Ovary (tissue), 10 donors: ENCODE measurements at regions of chr2 and their contacts with region 1.

Region 1: DNA sequence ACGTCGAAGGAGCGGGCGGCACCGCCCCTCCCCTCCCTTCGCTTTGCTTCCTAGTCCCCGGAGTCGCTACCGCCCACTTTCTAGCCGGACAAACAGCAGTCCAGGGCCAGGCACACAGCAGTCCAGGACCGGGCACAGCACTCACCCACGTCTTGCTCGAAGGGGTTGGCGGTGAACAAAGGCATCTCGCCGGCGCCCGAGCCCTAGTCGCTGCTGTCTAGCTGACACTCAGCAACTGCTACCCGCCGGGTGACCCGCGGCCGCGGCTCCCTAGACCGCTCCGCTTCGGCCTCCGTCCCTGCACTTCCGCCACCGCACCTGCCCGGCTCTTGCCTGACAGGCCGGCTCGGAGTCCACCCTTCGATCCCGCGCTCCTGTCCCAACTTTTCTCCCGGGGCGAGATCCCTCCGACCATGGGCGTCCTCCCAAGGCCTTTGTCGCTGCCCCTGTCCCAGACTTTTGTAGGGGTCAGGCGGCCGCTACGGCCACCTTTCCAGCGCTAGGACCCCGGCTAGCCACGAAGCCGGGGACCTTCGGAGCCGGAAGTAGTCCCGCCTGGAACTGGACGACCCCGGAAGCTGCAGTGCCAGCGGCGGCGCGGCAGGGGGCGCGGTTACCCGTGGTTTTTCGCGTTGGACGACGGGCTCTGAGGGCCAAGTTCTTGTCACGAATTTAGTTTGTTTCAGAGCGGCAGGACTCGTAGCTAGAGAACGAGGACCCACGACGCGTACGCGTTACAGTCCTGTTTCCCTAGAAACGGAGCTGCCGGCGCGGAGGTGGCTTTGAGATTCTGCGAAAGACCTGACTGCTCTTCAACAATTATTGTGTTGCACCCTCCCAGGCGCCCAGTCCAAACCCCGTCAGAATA is at the start of gene STAM2:
- DNase-seq: peak; percentile 90 to 97 (median 92)
- H3K4me3 ChIP-seq: peak within 1 kb of the TSS; percentile 93
- H3K27ac ChIP-seq: peak within 1 kb of the TSS; percentile 60 to 92
- H3K4me1 ChIP-seq: peaks cover 4% of the 10 kb centered on the region
- H3K27me3 ChIP-seq: no peaks in the 10 kb centered on the region
- CTCF ChIP-seq: peak; percentile 94 to 95 (median 94)
- EP300 ChIP-seq: no peak
- POLR2A ChIP-seq: peak; percentile 61
- total RNA-seq, gene STAM2: 29.6 to 40.0 (median 33.9) TPM

Region 2: GRCh38 chr2:152036611-152037469 is 138.9 kb before region 1 on chr2:
- intact Hi-C with region 1: loop called in 2 of 4 experiments (anchors 5 to 10 kb)
- DNase-seq: peak; percentile 50 to 74 (median 64)
- H3K4me3 ChIP-seq: no peak overlapping the region
- H3K27ac ChIP-seq: no peak overlapping the region
- H3K4me1 ChIP-seq: no peaks in the 10 kb centered on the region
- H3K27me3 ChIP-seq: no peaks in the 10 kb centered on the region
- CTCF ChIP-seq: peak; percentile 33 to 60 (median 57)
- EP300 ChIP-seq: no peak
- POLR2A ChIP-seq: no peak

Region 3: GRCh38 chr2:152717228-152718075 is 541.8 kb after region 1 on chr2 and contains the start of gene PRPF40A:
- intact Hi-C with region 1: loop called in 1 of 4 experiments (anchors 5 kb)
- DNase-seq: peak; percentile 98 to 99 (median 99)
- H3K4me3 ChIP-seq: peak within 1 kb of the TSS; percentile 96
- H3K27ac ChIP-seq: peak within 1 kb of the TSS; percentile 92 to 94
- H3K4me1 ChIP-seq: peaks cover 5% of the 10 kb centered on the region
- H3K27me3 ChIP-seq: no peaks in the 10 kb centered on the region
- CTCF ChIP-seq: peak in 1 of 3 donors; percentile 16
- EP300 ChIP-seq: no peak
- POLR2A ChIP-seq: peak; percentile 60
- total RNA-seq, gene PRPF40A: 55.0 to 81.9 (median 64.9) TPM